ENCODE measurements at regions of chr6 and their contacts with region 1.

Region 1: GRCh38 chr6:43769526-43770416 is at the start of gene VEGFA:
- DNase-seq: peak; percentile 84 to 85
- ATAC-seq: peak; percentile 55 to 76
- H3K4me3 ChIP-seq: peak within 1 kb of the TSS; percentile 59
- H3K27ac ChIP-seq: peak within 1 kb of the TSS; percentile 97 to 100
- H3K4me1 ChIP-seq: peaks cover 14% of the 10 kb centered on the region
- CTCF ChIP-seq: peak; percentile 87
- EP300 ChIP-seq: no peak
- POLR2A ChIP-seq: peak; percentile 92
- RAD21 ChIP-seq: peak; percentile 92
- polyA plus RNA-seq, gene VEGFA: 83.7 and 101 TPM in 2 replicates

Region 2: DNA sequence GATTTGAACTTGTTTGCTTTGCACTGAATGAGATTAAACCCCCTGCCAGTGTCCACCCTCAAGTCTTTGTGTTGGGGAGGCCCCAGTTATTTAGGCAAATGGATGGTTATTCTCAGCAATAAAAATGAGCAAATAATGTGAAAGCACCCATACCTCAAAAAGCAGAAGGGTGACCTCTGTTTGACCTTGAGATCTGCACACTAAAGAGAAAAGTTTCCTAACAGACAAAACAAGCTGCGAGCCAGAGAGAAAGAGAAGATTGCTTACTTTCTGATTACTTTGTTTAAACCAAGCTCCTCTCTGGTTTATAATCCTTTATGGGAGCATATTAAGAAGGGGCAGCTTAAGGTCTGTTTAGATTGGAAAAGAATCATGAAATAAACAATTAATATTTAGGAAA is 1287.6 kb before region 1 on chr6:
- CTCF ChIA-PET with region 1: no interaction called
- POLR2A ChIA-PET with region 1: no interaction called
- DNase-seq: no peak
- ATAC-seq: no peak
- H3K4me3 ChIP-seq: no peak overlapping the region
- H3K27ac ChIP-seq: no peak overlapping the region
- H3K4me1 ChIP-seq: no peaks in the 10 kb centered on the region
- CTCF ChIP-seq: no peak
- EP300 ChIP-seq: no peak
- POLR2A ChIP-seq: no peak
- RAD21 ChIP-seq: no peak

Region 3: GRCh38 chr6:43758617-43759050 is 11.1 kb before region 1 on chr6:
- CTCF ChIA-PET with region 1: interaction called, 43 read pairs
- POLR2A ChIA-PET with region 1: interaction called, 5 read pairs
- DNase-seq: peak in 1 of 2 experiments; percentile 27
- ATAC-seq: peak; percentile 57 to 85; a peak in 4 of 6 replicates
- H3K4me3 ChIP-seq: no peak overlapping the region
- H3K27ac ChIP-seq: 0 out of 6 replicates have a peak overlapping the region, but pooled peaks of 1 of the 2 experiments have one; percentile 27
- H3K4me1 ChIP-seq: no peaks in the 10 kb centered on the region
- CTCF ChIP-seq: peak; percentile 52
- EP300 ChIP-seq: no peak
- POLR2A ChIP-seq: no peak
- RAD21 ChIP-seq: peak; percentile 53 to 60

Region 4: DNA sequence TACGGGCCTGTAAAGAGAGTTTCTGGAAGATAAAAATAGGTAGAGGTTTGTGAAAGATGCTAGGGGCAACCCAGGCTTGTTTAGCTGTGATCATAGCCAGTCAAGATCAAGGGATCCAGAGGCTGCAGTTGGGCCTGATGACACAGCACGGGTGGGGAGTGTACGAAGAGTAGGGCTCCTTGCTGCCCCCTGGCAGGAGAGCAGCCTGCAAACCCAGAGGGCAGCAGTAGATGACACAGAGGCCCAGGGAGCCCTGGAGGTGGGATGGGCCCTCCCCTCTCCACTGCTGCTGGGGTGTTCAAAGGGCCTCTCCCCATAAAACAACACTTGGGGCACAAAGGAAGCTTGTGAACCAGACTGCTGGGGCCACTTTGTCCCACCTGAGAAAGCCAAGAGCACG is 47.4 kb after region 1 on chr6:
- CTCF ChIA-PET with region 1: interaction called, 24 read pairs
- POLR2A ChIA-PET with region 1: interaction called, 5 read pairs
- DNase-seq: peak; percentile 62 to 66
- ATAC-seq: peak; percentile 97 to 100
- H3K4me3 ChIP-seq: no peak overlapping the region
- H3K27ac ChIP-seq: peak overlapping the region; percentile 63 to 80
- H3K4me1 ChIP-seq: peaks cover 5% of the 10 kb centered on the region; the same call in 2 of the 3 replicates
- CTCF ChIP-seq: peak; percentile 38; the same call in 2 of the 3 replicates
- EP300 ChIP-seq: no peak
- POLR2A ChIP-seq: no peak
- RAD21 ChIP-seq: peak; percentile 32 to 38; a peak in 2 of 5 replicates

Region 5: DNA sequence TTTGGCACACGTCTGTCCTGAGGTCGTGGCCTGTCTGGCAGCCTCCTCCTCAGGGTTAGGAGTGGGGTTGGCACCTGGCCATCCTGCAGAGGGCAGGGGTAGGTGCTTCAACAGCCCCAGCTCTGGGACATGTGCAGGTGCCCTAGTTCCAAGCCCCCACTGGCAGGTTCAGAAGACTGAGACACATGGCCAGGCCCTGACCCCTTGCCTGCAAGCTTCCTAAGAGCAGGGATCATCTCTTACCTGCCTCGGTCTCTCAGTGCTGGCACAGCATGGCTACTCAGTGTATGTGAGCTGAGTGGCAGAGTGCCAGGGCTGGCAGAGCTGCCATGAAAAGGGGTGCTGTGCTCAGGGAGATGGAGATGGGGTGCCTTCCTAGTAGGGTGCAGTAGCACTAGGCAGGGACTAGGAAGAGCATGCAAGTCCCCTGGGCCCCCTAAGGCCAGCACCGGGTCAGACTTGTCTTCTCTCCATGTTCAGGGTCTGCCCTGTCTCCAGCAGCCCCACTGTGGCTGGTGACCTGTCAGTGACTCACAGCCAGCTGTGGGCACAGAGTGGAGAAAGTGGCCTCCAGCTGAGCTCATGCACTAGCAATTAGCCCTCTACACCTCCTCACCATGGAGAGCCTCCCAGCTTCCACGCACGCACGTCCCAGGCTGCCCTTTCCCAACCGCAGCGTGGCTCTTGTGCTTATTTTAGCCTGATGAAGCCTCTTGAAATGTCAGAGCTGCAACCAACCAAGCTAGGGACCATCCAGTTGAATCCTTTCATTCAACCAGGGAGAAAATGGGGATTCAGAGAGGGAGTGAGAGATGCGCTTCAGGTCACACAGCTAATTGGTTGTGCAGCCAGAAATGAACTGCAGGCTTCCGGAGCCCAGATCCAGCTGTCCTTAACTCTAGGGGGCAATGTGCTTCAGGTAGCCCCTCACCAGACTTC is 240.9 kb after region 1 on chr6:
- CTCF ChIA-PET with region 1: interaction called, 19 read pairs
- POLR2A ChIA-PET with region 1: interaction called, 11 read pairs
- DNase-seq: peak in 1 of 2 experiments; percentile 41
- ATAC-seq: peak; percentile 70 to 83
- H3K4me3 ChIP-seq: no peak overlapping the region
- H3K27ac ChIP-seq: peak overlapping the region; percentile 84 to 100
- H3K4me1 ChIP-seq: peaks cover 57% of the 10 kb centered on the region
- CTCF ChIP-seq: no peak
- EP300 ChIP-seq: peak in 1 of 2 experiments; percentile 32; a peak in 2 of 5 replicates
- POLR2A ChIP-seq: no peak
- RAD21 ChIP-seq: no peak

Region 6: DNA sequence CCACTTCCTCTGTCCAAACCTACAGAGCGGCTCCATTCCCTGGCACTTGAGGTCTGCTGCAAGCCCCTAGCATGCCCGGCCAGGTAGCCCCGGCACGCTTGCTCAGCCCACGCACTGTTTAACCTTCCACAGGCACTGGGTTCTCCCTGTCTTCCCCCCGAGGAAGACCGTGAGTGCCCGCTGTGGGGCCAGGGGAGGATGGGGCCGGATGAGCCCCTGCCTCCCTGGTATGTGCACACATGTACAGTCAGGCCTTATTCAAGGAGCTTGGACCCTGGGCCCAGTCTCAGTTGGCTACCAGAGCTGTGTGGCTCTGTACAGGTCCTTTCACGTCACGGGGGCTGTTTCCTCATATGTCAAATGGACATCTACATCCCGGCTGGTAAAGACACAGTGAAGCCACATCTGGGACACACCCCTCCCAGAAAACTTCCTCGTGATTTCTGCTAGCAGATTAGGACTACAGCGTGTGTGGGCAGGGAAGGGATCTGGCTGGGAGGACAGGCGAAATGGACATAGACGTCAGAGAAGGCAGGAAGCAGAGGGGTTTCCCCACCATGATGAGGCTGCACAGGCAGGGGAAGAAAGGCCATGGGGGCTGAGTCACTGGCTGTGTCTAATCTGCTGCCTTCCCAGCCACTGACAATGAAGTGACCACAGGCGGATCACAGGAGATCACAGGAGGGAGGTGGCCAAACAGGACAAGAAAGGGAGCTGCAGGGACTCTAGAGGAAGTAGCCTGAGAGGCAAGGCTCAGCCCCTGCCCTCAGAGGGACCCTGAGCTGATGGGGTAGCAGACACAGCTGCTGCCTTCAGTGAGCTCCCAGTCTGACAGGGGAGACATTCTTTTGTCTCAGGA is 294.5 kb after region 1 on chr6:
- CTCF ChIA-PET with region 1: interaction called, 15 read pairs
- POLR2A ChIA-PET with region 1: interaction called, 4 read pairs
- DNase-seq: peak; percentile 69 to 86
- ATAC-seq: peak; percentile 85 to 87
- H3K4me3 ChIP-seq: no peak overlapping the region
- H3K27ac ChIP-seq: peak overlapping the region; percentile 97 to 98
- H3K4me1 ChIP-seq: peaks cover 67% of the 10 kb centered on the region
- CTCF ChIP-seq: no peak
- EP300 ChIP-seq: peak; percentile 38 to 44; a peak in 2 of 5 replicates
- POLR2A ChIP-seq: no peak
- RAD21 ChIP-seq: no peak